Activated naive CD4-positive, alpha-beta T cell treated with anti-CD3 and anti-CD28 coated beads for 36 hours (primary cell): ENCODE measurements at regions of chr3 and their contacts with region 1.

Region 1: DNA sequence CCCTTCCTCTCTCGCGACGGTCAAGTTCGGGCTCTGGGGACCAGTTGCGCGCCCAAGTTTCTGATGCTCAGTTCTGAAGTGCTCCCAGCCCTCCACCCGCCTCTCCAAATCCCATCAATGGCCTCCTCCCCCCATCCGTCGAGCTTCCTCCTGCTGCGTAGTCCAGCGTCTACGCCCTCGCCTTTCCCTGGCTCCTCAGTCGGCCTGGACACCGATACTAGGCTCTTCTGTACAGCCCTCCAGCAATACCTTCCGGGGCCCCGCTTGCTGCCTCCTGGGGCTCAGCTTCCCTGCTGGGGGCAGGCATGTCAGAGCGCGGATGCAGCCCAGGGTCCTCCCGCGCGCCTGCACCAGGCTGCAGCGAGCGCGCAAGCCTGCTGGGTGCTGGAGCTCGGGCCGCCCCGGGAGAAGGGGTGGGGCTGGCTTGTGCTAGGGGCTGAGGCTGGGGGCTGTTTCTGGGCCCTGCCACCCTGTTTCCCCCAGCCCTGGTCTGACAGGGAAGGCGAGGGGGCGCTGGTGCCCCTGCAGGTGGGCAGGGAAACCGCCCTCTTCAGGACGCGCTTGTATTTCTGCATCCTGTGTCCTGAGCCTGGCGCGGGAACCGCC is 353.3 kb upstream of the SUCLG2 start:
- DNase-seq: peak; percentile 35
- H3K4me3 Mint-ChIP-seq: peak overlapping the region; percentile 86
- H3K27ac Mint-ChIP-seq: no peak overlapping the region
- H3K4me1 Mint-ChIP-seq: peaks cover 11% of the 10 kb centered on the region
- H3K27me3 Mint-ChIP-seq: peaks cover 2% of the 10 kb centered on the region

Region 2: DNA sequence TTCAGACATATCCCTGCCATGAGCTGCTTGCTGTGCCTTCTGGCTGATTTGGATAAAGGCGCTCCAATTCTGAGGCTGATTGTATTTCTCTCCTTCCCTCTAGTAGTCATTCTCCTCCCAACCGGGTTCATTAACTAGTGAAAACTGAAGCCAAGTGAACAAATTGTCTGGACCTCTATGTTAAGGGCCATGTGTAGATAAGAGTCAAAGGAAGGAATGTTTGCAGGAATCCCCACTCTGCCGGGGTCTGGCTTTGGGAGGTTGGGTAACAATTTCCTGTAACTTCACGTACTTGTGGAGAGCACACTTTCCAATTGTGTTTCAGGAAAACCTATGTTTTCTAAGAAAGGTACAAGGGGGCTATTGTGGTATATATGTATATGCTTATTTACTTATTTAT is 315.1 kb before region 1 on chr3:
- CTCF ChIA-PET with region 1: no interaction called
- intact Hi-C with region 1: no loop called
- DNase-seq: no peak
- H3K4me3 Mint-ChIP-seq: no peak overlapping the region
- H3K27ac Mint-ChIP-seq: no peak overlapping the region
- H3K4me1 Mint-ChIP-seq: peaks cover 2% of the 10 kb centered on the region
- H3K27me3 Mint-ChIP-seq: no peaks in the 10 kb centered on the region

Region 3: DNA sequence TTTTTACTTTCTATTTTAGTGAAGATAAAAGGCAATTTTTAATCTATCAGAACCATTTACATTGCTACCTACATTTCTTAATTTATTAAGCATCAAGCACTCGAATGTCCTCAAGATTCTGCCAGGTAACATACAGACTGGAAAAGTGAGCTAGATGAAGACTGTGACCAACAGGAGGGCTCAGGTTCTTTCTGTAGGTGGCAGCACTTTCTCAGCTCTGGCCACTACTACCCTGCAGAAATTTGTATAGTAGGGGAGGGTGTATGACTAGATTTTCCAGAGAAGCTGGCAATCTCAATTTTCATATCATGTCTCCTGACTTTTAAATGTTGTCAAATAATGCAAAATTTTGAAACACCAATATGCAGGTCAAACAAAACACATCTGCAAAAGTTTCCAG is 188.3 kb before region 1 on chr3:
- CTCF ChIA-PET with region 1: no interaction called
- intact Hi-C with region 1: loop called (anchors 10 kb)
- DNase-seq: peak; percentile 37
- H3K4me3 Mint-ChIP-seq: no peak overlapping the region
- H3K27ac Mint-ChIP-seq: no peak overlapping the region
- H3K4me1 Mint-ChIP-seq: peaks cover 2% of the 10 kb centered on the region
- H3K27me3 Mint-ChIP-seq: no peaks in the 10 kb centered on the region